ENCODE measurements at regions of chr11 and their contacts with region 1.

Region 1: GRCh38 chr11:18321980-18322711 is at the starts of genes GTF2H1 and HPS5:
- DNase-seq: peak; percentile 93
- ATAC-seq: peak; percentile 92
- H3K4me3 Mint-ChIP-seq: peak within 1 kb of the TSS; percentile 92
- H3K27ac Mint-ChIP-seq: peak within 1 kb of the TSS; percentile 99
- H3K4me1 Mint-ChIP-seq: peaks cover 51% of the 10 kb centered on the region
- H3K27me3 Mint-ChIP-seq: no peaks in the 10 kb centered on the region
- total RNA-seq, gene GTF2H1: 44.4 to 47.9 TPM
- total RNA-seq, gene HPS5: 16.1 to 17.8 TPM

Region 2: DNA sequence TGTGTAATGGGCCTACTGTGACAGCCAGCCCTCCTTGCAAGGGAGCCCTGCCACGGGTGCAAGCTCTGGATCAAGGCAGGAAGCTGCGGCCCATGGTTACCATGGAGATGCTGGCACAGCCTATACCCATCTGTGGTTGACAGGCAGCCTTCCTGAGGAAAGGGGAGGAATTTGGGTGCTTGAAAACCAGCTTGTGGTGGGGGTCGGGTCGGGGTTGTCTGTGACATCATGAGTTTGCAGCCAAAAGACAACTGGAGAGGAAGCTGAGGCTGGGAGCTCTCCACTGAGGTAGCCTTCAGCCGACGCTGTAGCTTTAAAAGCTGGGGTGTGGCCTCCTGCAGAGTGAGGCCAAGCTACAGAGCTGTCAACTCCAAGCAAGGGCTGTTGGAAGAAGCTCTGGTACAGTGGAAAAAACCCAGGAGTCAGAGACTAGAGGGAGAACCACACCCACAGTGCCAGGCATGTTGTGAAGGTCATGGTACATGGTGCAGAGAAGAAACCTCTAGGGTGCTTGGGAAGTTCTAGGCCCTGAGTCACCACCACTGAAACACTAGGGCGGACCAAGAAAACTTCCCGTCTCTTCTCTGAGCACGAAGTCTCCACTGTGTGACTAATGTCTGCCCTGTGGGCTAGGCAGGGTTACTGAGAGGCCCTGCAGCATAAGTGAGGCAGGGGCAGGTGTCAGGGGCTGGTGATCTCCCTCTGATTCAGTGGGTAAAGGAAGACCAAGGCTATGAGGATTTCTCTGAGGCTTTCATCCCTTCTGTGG is 61.4 kb after region 1 on chr11:
- POLR2A ChIA-PET with region 1: interaction called, 28 read pairs
- DNase-seq: peak; percentile 72
- ATAC-seq: peak; percentile 77
- H3K4me3 Mint-ChIP-seq: peak overlapping the region; percentile 73
- H3K27ac Mint-ChIP-seq: peak overlapping the region; percentile 97
- H3K4me1 Mint-ChIP-seq: peaks cover 35% of the 10 kb centered on the region
- H3K27me3 Mint-ChIP-seq: no peaks in the 10 kb centered on the region

Region 3: DNA sequence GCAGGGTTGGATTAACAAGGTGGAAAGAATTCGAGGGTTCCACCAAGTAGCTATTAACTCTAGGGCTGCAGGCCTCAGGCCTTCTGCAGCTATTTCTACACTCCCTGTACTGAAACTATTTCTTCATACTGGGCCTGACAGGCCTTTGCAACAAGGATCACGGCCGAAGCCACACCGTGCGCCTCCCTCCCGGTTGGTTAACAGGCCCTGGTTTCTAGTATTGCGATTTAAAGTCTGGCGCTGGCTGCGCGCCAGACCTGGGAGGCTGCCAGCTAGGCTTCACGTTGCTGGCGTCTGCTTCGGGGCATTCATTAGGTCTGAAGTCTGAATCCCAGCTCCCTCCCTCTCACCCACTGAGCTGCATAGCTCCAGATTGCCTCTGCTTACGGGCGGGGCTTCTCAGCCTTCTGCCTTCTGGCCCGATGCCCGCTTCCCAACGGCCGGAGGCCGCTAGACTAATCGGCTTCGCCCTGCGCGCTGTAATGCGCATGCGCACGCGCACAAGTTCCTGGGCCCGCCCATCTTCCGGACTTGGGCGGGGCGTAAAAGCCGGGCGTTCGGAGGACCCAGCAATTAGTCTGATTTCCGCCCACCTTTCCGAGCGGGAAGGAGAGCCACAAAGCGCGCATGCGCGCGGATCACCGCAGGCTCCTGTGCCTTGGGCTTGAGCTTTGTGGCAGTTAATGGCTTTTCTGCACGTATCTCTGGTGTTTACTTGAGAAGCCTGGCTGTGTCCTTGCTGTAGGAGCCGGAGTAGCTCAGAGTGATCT is 73.8 kb after region 1 on chr11:
- POLR2A ChIA-PET with region 1: interaction called, 77 read pairs
- DNase-seq: peak; percentile 98
- ATAC-seq: peak; percentile 63
- H3K4me3 Mint-ChIP-seq: peak overlapping the region; percentile 97
- H3K27ac Mint-ChIP-seq: peak overlapping the region; percentile 96
- H3K4me1 Mint-ChIP-seq: peaks cover 36% of the 10 kb centered on the region
- H3K27me3 Mint-ChIP-seq: no peaks in the 10 kb centered on the region

Region 4: GRCh38 chr11:18526521-18527296 is 204.6 kb after region 1 on chr11 and contains the start of gene TSG101:
- POLR2A ChIA-PET with region 1: interaction called, 19 read pairs
- DNase-seq: peak; percentile 93
- ATAC-seq: peak; percentile 91
- H3K4me3 Mint-ChIP-seq: peak within 1 kb of the TSS; percentile 99
- H3K27ac Mint-ChIP-seq: peak within 1 kb of the TSS; percentile 100
- H3K4me1 Mint-ChIP-seq: peaks cover 24% of the 10 kb centered on the region
- H3K27me3 Mint-ChIP-seq: no peaks in the 10 kb centered on the region
- total RNA-seq, gene TSG101: 35.2 to 35.5 TPM